Psoas muscle (tissue), 8 donors: ENCODE measurements at regions of chr13 and their contacts with region 1.

Region 1: DNA sequence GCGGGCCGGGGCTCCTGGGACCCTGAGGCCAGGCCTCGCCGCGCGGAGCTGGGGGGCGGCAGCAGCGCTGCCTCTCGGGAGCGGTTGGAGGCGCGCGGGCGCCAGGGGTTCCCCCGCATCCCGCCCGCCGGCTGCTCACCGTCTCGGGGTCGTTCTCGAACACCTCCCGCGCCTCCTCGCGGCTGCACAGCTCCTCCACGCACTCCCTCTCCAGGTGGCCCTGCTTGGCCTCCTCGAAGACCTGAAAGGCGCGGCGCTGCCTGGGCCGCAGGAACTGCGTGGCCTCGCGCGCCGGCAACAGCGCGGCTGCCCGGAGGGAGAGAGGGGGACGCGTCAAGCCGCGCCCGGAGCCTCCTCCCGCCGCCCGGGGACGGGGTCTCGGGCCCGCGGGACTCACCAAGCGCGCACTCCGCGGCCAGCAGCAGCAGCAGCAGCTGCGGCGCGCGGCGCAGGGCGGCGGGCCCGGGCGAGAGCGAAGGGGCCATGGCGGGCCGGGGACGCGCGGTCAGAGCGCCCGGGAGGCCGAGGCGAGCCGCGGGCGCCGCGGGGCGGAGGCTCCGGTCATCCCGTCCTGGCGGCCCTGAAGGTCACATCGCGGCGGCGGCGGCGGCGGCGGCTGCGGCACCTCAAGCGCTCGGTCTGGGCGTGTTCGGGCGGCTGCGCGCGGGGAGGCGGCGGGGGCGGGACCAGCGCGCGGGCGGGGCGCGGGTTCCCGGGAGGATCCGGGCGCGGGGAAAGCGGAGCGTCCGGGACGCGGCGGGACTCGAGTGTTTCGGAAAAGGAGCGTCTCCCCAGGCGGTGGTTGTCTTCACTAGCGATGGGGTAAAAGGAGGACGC is at the start of gene GAS6:
- DNase-seq: peak; percentile 74 to 87
- ATAC-seq: peak; percentile 59 to 84 (median 70)
- H3K4me3 ChIP-seq: peak within 1 kb of the TSS; percentile 90
- H3K27ac ChIP-seq: peak within 1 kb of the TSS; percentile 85
- H3K4me1 ChIP-seq: peaks cover 25% of the 10 kb centered on the region
- H3K27me3 ChIP-seq: no peaks in the 10 kb centered on the region
- CTCF ChIP-seq: peak; percentile 23
- total RNA-seq, gene GAS6: 65.5 to 103 (median 75.9) TPM

Region 2: DNA sequence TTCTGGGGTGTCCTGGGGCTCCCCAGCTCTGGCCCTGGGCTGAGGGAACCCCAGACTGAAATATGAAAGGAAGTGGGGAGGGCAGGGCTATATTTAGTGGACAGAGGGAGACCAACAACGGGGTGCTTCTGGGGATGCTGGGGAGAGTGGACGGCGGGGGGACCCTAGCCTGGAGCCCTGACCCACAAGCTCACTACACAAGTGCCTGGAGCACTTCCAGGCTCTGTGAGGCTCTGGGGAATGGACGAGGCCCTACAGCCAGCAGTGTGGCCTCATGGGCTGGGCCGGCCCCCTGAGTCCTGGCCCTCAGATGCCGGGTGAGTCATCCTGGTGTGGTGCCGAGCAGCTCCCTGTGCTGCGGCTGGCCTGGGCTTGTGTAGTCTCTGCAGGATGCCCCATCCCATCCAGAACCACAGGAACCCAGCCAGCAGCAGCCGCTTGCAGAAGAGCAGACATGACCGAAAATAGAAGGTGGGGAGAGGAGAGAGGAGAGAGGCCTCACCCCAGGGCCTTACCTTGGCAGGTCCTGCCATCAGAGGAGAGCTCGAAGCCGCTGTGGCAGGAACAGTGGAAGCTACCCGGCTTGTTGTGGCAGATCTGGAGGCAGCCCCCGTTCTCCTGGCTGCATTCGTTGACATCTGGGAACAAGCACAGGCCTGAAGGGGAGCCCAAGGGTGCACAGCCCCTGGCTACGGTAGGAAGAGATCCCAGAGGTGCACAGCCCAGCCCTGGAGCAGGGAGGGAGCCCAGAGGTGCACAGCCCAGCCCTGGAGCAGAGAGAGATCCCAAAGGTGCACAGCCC is 25.9 kb before region 1 on chr13:
- intact Hi-C with region 1: loop called in 1 of 2 experiments (anchors 2 kb)
- DNase-seq: peak; percentile 96 to 99
- ATAC-seq: peak; percentile 94 to 98 (median 96)
- H3K4me3 ChIP-seq: peak overlapping the region; percentile 33
- H3K27ac ChIP-seq: peak overlapping the region; percentile 88
- H3K4me1 ChIP-seq: peaks cover 36% of the 10 kb centered on the region
- H3K27me3 ChIP-seq: no peaks in the 10 kb centered on the region
- CTCF ChIP-seq: no peak

Region 3: DNA sequence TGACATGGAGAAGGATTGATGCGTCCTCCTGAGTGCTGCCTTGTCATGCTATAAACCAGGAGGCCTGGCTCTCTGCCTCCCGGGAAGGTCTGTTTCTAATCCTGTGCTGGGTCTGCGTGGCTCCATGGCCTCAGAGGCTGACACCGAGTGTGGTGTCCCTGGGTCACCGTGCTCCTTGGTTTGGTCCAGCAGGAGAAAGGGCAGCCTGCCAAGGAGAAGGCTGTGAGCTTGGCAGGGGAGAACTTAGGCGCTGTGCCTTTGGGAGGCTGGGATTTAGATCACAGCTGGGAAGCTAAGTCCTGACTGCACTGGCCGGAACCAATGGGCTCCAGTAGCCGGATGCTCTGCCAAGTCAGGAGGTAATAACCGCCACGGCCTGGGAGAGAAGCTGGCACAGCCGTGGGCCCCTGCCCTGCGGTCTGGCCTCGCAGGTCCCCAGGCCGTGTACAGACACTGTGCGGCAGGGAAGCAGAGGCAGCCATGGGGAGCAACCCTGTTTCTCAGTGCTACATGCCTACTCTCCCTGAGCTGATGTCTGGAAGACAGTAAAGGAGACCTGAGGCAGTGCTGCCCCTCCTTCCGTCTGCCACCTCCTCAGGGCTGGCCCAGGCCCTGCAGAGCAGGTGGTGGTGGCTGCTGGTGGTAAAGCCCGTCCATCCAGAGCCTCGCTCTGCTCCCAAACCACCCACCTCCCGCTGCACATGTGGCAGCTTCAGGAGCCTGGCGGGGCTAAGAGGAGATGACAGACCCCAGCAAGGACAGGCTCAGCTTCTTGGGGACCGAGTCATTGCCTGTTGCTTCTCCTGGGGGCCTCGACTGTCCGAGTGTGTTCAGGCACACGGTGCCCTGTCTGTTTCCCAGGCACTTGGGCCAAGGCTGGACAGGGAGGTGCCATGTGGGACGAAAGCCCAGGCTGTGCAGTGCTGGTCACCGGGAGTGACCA is 65.3 kb after region 1 on chr13:
- intact Hi-C with region 1: loop called in 1 of 2 experiments (anchors 10 kb)
- DNase-seq: peak; percentile 92 to 98
- ATAC-seq: peak; percentile 83 to 86 (median 86)
- H3K4me3 ChIP-seq: peak overlapping the region; percentile 16
- H3K27ac ChIP-seq: peak overlapping the region; percentile 86
- H3K4me1 ChIP-seq: peaks cover 50% of the 10 kb centered on the region
- H3K27me3 ChIP-seq: no peaks in the 10 kb centered on the region
- CTCF ChIP-seq: no peak

Region 4: DNA sequence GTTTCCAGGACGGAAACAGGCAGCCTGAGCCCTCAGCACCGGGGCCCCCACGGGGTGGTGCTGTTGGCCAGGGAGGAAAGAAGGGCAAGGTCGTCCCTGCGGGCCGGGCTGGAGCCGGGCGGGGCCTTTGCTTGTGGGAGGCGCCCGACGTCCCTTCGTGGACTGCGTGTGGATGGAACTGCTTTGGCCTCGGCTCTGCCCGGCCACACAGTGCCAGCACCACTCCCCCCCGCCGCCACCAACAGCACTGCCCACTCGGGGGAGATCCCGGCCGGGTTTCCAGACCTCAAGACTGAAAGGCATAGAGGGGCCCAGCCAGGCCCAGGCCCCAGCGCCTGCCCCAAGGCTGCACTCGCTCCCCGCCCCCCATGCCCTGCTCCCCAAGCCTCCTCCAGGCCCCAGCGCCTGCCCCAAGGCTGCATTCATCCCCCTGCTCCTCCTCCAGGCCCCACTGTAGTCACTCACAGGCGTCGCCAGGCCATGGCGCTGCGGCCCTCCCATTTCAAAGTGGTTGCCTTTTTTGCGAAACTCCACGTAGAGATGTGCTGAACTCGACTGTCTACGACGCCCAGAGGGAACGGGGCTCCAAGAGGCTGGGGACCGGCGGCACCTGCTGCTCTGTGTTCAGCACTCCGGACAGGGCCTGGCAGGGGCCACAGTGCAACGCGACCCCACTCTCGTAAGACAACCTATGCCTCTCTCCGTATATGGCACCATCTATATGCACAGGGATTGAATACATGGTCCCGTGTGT is 87.8 kb after region 1 on chr13:
- intact Hi-C with region 1: loop called in 1 of 2 experiments (anchors 5 kb)
- DNase-seq: peak; percentile 89 to 95
- ATAC-seq: peak; percentile 91 to 97 (median 94)
- H3K4me3 ChIP-seq: peak overlapping the region; percentile 38
- H3K27ac ChIP-seq: no peak overlapping the region
- H3K4me1 ChIP-seq: peaks cover 5% of the 10 kb centered on the region
- H3K27me3 ChIP-seq: no peaks in the 10 kb centered on the region
- CTCF ChIP-seq: peak; percentile 86